ENCODE measurements at regions of chr19 and their contacts with region 1.

Region 1: GRCh38 chr19:19404879-19405860 is at the start of gene GATAD2A:
- DNase-seq: peak; percentile 96
- ATAC-seq: peak; percentile 74
- H3K4me3 Mint-ChIP-seq: peak within 1 kb of the TSS; percentile 91
- H3K27ac Mint-ChIP-seq: peak within 1 kb of the TSS; percentile 95
- H3K4me1 Mint-ChIP-seq: peaks cover 69% of the 10 kb centered on the region
- H3K27me3 Mint-ChIP-seq: no peaks in the 10 kb centered on the region
- total RNA-seq, gene GATAD2A: 123 to 139 TPM

Region 2: DNA sequence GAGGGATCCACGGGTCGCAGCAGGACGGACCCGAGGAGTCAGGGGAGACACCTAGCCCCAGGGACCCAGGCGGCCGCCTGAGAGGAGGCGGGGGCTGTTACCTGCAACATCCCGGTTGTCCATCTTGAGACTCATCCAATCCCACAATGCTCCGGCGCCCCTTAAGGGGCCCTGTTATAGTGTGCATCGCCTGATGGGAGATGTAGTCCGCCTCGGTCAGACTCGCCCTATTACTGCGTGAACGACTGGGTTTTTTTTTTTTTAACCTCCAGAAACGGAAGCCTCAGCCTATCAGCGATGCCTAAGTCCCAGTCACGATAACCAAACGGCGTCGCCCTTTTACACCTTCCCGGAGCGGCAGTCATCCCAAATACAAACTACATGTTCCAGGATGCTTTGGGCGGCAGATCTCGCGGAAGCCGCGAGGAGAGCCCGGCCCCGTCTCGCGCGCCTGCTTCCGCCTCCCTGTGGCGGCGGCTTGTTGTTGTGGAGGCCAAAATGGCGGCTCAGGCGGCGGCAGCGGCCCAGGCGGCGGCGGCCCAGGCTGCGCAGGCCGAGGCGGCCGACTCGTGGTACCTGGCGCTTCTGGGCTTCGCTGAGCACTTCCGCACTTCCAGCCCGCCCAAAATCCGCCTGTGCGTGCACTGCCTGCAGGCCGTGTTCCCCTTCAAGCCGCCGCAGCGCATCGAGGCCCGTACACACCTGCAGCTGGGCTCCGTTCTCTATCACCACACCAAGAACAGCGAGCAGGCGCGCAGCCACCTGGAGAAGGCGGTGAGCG is 84.6 kb before region 1 on chr19 and contains the starts of genes MAU2 and SUGP1:
- CTCF ChIA-PET with region 1: no interaction called
- POLR2A ChIA-PET with region 1: no interaction called
- intact Hi-C with region 1: loop called in 1 of 2 experiments (anchors 1 kb)
- DNase-seq: peak; percentile 96
- ATAC-seq: peak; percentile 93
- H3K4me3 Mint-ChIP-seq: peak within 1 kb of the TSS; percentile 93
- H3K27ac Mint-ChIP-seq: peak within 1 kb of the TSS; percentile 100
- H3K4me1 Mint-ChIP-seq: peaks cover 39% of the 10 kb centered on the region
- H3K27me3 Mint-ChIP-seq: no peaks in the 10 kb centered on the region
- total RNA-seq, gene MAU2: 33.3 to 45.7 TPM
- total RNA-seq, gene SUGP1: 49.4 to 62.0 TPM

Region 3: GRCh38 chr19:19366612-19367396 is 38.4 kb before region 1 on chr19:
- CTCF ChIA-PET with region 1: interaction called, 3 read pairs
- POLR2A ChIA-PET with region 1: interaction called, 3 read pairs
- intact Hi-C with region 1: loop called (anchors 1 to 5 kb)
- DNase-seq: peak; percentile 86
- ATAC-seq: peak; percentile 84
- H3K4me3 Mint-ChIP-seq: no peak overlapping the region
- H3K27ac Mint-ChIP-seq: peak overlapping the region; percentile 38
- H3K4me1 Mint-ChIP-seq: peaks cover 17% of the 10 kb centered on the region
- H3K27me3 Mint-ChIP-seq: no peaks in the 10 kb centered on the region

Region 4: DNA sequence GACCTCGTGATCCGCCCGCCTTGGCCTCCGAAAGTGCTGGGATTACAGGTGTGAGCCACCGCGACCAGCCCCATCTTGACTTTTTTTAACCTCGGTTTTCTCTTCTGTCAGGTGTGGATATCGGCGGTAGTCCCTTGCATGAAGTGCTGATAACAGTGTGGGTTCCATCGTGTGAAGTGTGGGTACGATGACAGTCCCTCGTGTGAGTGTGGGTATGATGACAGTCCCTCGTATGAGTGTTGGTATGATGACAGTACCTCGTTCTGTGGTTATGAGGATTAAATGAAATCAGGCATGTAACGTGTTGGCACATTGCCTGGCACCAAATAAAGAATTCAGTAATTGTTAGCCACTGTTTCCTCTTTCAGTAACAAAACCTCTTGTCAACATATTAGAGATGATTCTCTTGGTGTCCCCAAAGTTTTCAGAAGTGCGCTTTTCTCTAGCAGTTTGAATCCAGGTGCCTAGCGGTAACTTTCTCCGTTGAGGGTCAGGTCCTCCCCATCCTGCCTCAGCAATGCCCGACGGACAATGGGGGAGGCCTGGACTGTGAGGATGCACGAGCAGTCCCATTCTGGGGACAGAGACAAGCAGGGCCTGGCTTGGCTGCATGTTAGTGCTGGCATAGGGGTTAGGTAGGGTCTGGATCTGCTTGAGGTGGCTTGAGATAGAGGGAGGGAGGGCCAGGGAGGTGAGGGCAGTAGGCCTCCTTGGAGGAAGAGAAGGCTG is 15.6 kb after region 1 on chr19:
- CTCF ChIA-PET with region 1: interaction called, 4 read pairs
- POLR2A ChIA-PET with region 1: interaction called, 10 read pairs
- intact Hi-C with region 1: no loop called
- DNase-seq: peak; percentile 57
- ATAC-seq: peak; percentile 89
- H3K4me3 Mint-ChIP-seq: no peak overlapping the region
- H3K27ac Mint-ChIP-seq: peak overlapping the region; percentile 58
- H3K4me1 Mint-ChIP-seq: peaks cover 74% of the 10 kb centered on the region
- H3K27me3 Mint-ChIP-seq: no peaks in the 10 kb centered on the region

Region 5: GRCh38 chr19:19459707-19460251 is 54.6 kb after region 1 on chr19:
- CTCF ChIA-PET with region 1: interaction called, 3 read pairs
- POLR2A ChIA-PET with region 1: no interaction called
- intact Hi-C with region 1: loop called (anchors 1 to 2 kb)
- DNase-seq: peak; percentile 85
- ATAC-seq: peak; percentile 67
- H3K4me3 Mint-ChIP-seq: peak overlapping the region; percentile 79
- H3K27ac Mint-ChIP-seq: peak overlapping the region; percentile 99
- H3K4me1 Mint-ChIP-seq: peaks cover 84% of the 10 kb centered on the region
- H3K27me3 Mint-ChIP-seq: no peaks in the 10 kb centered on the region

Region 6: GRCh38 chr19:19643158-19644053 is 238.2 kb after region 1 on chr19 and contains the start of gene GMIP:
- CTCF ChIA-PET with region 1: no interaction called
- POLR2A ChIA-PET with region 1: no interaction called
- intact Hi-C with region 1: no loop called
- DNase-seq: peak; percentile 92
- ATAC-seq: peak; percentile 82
- H3K4me3 Mint-ChIP-seq: peak within 1 kb of the TSS; percentile 100
- H3K27ac Mint-ChIP-seq: peak within 1 kb of the TSS; percentile 96
- H3K4me1 Mint-ChIP-seq: peaks cover 10% of the 10 kb centered on the region
- H3K27me3 Mint-ChIP-seq: no peaks in the 10 kb centered on the region
- total RNA-seq, gene GMIP: 54.9 to 56.6 TPM

Region 7: DNA sequence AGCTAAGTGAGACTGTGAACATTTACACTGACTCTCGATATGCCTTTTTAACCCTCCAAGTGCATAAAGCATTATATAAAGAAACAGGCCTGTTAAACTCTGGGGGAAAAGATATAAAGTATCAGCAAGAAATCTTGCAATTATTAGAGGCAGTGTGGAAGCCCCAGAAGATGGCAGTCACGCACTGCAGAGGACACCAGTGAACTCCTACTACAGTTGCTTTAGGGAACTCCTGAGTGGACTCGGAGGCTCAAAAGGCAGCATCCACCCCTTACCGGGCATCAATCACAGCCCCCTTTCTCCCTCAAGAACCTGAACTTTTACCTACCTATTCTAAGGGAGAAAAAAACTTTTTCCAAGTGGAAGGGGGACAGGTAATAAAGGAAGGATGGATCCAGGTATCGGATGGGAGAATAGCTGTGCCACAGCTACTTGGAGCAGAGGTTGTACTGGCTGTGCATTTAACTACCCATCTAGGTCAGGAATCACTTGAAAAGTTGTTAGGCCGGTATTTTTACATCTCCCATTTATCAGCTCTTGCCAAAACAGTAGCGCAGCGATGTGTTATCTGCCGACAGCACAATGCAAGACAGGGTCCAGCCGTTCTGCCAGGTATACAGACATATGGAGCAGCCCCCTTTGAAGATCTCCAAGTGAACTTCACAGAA is 842.0 kb after region 1 on chr19:
- CTCF ChIA-PET with region 1: no interaction called
- POLR2A ChIA-PET with region 1: no interaction called
- intact Hi-C with region 1: no loop called
- DNase-seq: peak; percentile 62
- ATAC-seq: no peak
- H3K4me3 Mint-ChIP-seq: no peak overlapping the region
- H3K27ac Mint-ChIP-seq: no peak overlapping the region
- H3K4me1 Mint-ChIP-seq: peaks cover 6% of the 10 kb centered on the region
- H3K27me3 Mint-ChIP-seq: no peaks in the 10 kb centered on the region

Measured in activated CD4-positive, alpha-beta T cell treated with anti-CD3 and anti-CD28 coated beads for 36 hours (primary cell).